OCI-LY7 (cell line): ENCODE measurements at regions of chr14 and their contacts with region 1.

Region 1: DNA sequence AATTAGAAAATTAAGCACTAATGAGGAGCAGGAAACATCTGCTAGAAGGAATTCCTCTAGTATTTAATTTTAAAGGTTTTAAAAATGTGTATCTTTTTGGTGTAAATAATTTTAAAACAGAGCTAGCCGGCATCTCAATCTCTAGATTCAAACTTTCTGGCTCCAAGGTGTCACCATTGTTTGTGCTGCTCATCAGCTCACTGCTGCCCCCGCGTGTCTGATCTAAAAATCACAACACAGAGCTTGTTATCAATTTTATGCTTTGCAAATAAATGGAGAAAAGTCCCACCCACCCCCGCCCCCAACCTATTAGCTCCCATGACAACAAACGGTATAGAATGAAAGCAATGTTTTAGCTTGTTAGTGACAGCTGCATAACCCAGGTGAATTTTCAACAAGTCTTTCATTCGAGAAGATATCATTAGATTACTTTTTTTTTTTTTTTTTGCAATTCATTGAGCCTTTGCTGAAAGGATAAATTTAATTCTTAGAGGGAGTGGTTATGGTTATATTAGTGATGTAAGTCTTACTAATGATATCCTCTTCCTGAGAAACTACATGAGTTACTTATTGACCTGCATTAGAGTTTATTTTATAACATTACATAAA is 11.3 kb upstream of the ABHD12B start:
- DNase-seq: peak; percentile 87
- H3K4me3 ChIP-seq: peak overlapping the region; percentile 68
- H3K27ac ChIP-seq: peak overlapping the region; percentile 62
- H3K4me1 ChIP-seq: peaks cover 39% of the 10 kb centered on the region
- CTCF ChIP-seq: peak; percentile 82

Region 2: DNA sequence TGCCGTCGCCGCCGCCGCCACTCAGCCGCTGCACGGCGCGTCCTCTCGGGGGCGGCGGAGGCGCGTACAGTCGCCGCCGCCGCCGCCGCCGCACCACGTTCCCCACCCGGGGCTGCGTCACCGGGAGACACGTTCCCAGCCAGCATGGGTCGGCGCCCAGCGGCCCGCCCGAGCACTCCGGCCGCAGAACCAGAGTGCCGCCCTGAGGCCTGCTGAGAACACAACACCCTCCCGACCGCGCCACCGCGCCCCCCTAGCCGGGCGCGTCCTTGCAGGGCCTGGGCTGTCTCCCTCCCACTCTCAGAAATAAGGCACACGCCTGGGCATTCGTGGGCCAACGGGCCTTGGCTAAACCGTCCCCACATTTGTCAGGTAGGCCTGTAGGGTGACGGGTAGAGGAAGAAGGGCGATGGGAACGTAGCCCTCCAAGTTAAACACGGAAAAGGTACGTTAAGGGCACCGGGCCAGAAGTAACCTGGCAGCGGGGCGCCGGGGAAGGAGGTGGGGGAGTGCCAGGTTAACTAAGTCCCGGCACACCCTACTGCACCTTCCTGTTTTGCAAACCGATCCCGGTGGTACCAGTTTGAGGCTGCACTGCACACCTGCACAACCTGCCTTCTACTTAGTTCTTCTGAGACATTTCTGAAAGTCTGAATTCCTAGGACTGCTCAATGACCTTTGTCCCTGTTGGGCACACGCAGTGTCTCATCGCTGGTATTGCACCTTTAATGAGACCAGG is 327.9 kb before region 1 on chr14 and contains the start of gene MAP4K5:
- CTCF ChIA-PET with region 1: no interaction called
- POLR2A ChIA-PET with region 1: interaction called, 3 read pairs
- intact Hi-C with region 1: loop called (anchors 2 kb)
- DNase-seq: peak; percentile 93
- H3K4me3 ChIP-seq: peak within 1 kb of the TSS; percentile 89
- H3K27ac ChIP-seq: peak within 1 kb of the TSS; percentile 71
- H3K4me1 ChIP-seq: peaks cover 27% of the 10 kb centered on the region
- CTCF ChIP-seq: peak; percentile 85
- total RNA-seq, gene MAP4K5: 44.0 and 49.8 TPM in 2 replicates

Region 3: DNA sequence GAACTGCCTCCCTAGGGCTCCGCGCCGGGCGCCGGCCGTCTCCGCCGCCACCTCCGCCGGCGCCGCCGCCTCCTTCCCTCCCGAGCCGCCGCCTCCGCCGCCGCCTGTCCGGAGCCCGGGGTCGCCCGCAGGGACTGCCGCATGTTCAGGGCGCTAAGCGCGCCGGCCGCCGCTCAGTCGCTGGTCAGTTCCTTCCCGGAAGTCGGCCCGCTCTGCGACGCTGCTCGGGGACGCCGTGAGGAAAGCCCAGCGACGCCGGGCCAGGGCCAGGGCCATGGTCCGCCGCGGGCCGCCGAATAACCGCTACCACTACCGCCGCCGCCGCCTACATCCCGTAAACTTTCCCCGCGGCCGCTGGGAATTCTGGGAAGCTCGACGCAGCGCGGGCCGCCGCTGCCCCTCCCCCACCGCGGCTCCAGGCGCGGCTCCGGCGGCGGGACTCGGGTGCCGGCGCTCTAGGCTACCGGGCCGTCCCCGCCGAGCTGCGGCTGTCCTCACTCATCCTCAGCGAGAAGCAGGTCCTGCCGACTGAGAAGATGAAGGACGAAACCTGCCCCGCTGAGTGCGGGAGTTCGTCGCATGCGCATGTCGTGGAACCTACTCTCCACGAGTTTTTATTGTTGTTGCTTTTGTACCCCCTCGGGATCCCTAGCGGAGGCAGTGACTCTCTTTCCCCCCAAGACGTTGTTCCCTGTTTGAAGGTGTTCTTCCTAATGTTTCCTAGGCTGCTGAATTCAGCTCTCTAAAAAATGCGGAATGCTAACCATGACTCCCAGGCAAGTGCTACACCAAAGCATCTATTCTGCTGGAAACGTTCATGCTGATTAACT is 192.4 kb before region 1 on chr14 and contains the start of gene SAV1:
- CTCF ChIA-PET with region 1: no interaction called
- POLR2A ChIA-PET with region 1: interaction called, 11 read pairs
- intact Hi-C with region 1: loop called (anchors 2 kb)
- DNase-seq: peak; percentile 65
- H3K4me3 ChIP-seq: peak within 1 kb of the TSS; percentile 92
- H3K27ac ChIP-seq: peak within 1 kb of the TSS; percentile 40
- H3K4me1 ChIP-seq: peaks cover 22% of the 10 kb centered on the region
- CTCF ChIP-seq: 0 out of 2 replicates have a peak, but pooled peaks have one; percentile 9
- total RNA-seq, gene SAV1: 6.7 and 10.4 TPM in 2 replicates

Region 4: GRCh38 chr14:50778721-50779483 is 81.7 kb before region 1 on chr14:
- CTCF ChIA-PET with region 1: interaction called, 10 read pairs
- POLR2A ChIA-PET with region 1: interaction called, 20 read pairs
- intact Hi-C with region 1: loop called (anchors 1 kb)
- DNase-seq: no peak
- H3K4me3 ChIP-seq: no peak overlapping the region
- H3K27ac ChIP-seq: peak overlapping the region; percentile 52
- H3K4me1 ChIP-seq: peaks cover 28% of the 10 kb centered on the region
- CTCF ChIP-seq: no peak

Region 5: GRCh38 chr14:50823051-50823761 is 37.4 kb before region 1 on chr14:
- CTCF ChIA-PET with region 1: interaction called, 3 read pairs
- POLR2A ChIA-PET with region 1: interaction called, 36 read pairs
- intact Hi-C with region 1: no loop called
- DNase-seq: peak; percentile 71
- H3K4me3 ChIP-seq: peak overlapping the region; percentile 62
- H3K27ac ChIP-seq: peak overlapping the region; percentile 80
- H3K4me1 ChIP-seq: peaks cover 77% of the 10 kb centered on the region
- CTCF ChIP-seq: no peak

Region 6: DNA sequence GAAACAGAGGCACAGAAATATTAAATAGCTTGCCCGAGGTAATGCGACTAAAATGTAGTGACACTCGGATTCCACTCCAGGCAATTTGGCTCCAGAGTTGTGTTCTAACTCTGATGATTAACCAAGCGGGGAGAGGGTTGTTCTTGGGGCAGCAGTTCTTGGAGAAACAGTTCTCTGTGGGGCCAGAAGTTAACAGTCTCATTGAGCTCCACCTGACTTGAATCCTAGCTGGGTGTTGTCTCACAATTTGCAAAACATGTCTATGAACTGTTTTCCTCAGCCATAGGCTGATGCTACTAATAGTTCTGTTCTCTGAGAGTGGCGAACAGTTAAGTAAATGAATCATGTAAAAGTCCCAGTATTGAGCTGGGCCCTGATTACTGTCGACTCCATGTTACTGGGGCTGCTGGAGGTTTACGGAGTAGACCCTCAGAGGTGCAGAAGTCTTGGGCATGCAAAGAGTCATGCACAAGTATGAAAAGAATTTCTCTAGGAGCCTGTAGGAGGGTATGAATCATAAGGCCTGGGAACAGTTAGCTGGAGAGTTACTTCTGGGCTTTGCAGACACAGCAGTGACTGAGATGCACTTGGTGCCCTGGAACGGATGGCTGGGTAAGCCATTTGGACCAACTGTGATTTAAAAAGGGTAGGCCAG is 14.2 kb before region 1 on chr14:
- CTCF ChIA-PET with region 1: no interaction called
- POLR2A ChIA-PET with region 1: interaction called, 17 read pairs
- intact Hi-C with region 1: no loop called
- DNase-seq: no peak
- H3K4me3 ChIP-seq: no peak overlapping the region
- H3K27ac ChIP-seq: no peak overlapping the region
- H3K4me1 ChIP-seq: no peaks in the 10 kb centered on the region
- CTCF ChIP-seq: no peak